ENCODE measurements at regions of chr15 and their contacts with region 1.

Region 1: DNA sequence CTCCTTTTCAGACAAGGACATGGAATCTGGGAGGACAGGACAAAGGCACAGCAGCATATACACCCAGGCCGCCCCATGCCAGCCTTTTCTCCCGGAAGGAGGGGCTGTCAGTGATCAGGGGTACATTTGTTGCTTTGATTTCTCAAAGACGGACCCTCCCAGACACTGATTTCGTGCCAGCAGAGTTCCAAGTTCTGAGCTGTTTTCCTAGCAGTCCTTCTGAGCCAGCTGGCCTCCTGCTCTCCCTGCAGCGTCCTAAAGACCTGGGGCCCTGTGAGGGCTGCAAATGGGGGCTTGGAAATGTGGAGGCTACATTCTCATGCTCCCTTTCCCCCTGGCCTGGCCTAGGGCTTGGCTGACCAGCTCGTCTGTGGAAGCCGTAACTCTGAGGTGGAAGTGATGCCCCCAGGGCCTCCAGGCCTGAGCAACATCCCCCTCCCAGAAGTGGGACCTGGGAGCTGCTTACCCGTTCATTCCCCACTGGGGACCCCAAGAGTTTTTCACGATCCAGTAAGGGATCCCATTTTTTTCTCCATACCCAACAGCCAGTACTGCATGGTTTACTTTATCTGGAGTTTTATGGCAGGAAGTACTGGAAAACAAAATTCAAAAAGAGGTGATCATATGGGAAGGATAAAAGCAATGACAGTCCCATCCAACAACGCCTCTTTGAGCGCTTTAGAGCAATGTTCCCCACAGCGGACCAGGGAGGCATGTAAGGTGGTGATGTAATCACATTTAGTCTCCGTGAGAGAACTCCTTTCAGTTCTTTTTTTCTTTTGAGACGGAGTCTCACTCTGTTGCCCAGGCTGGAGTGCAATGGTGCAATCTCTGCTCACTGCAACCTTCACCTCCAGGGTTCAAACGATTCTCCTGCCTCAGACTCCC is 22.1 kb downstream of the CTSH start:
- DNase-seq: no peak
- CTCF ChIP-seq: no peak

Region 2: GRCh38 chr15:78909791-78910228 is 13.0 kb before region 1 on chr15:
- CTCF ChIA-PET with region 1: interaction called, 19 read pairs
- POLR2A ChIA-PET with region 1: interaction called, 5 read pairs
- DNase-seq: peak; percentile 51
- CTCF ChIP-seq: peak; percentile 64

Region 3: DNA sequence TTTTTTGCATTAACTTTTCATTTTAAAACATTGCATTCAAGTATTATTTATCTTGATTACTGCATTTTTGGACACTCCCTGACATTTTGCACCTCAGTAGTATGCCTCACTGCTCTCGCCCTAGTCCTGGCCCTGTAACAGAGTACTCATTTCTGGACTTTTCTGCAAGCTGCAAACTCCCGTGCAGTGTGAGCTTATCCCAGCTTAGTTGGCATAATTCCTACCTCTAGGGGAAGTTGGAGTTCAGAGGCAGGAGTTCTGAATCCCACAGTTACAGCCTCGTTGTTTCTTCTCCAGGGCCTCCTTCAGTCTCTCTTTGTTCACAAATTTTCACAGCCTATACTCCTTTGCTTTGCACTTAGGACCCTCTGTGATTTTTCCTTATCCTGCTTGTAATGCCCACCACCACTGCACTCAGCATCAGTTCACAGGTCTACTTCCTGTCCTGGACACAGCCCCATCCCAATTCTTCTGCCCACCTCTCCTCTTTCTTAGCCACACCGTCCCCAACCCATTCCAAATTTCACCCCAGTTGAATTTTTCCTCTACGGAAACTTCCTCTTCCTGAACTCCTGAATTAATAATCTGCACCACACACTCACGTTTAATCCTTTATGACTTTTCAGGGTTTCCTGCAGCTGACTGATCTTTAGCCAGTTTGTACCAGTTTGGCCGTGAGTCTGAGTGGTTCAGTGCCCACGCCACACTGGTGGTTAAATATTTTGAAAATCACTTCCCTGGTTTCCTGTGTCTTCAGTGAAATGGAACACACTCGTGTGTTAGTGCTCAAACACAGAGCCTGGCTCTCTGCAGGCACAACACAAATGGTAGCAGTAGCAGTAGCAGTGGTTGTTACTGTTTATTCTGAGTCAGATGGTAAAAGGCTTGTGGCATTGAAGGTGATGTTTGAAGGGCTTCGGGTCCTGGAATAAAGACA is 28.4 kb after region 1 on chr15:
- CTCF ChIA-PET with region 1: no interaction called
- POLR2A ChIA-PET with region 1: no interaction called
- DNase-seq: no peak
- CTCF ChIP-seq: no peak

Measured in GM10248 (cell line).